ENCODE measurements at regions of chr20 and their contacts with region 1.

Region 1: GRCh38 chr20:34768096-34768495 is 57.4 kb downstream of the NCOA6 start:
- DNase-seq: no peak
- CTCF ChIP-seq: no peak

Region 2: DNA sequence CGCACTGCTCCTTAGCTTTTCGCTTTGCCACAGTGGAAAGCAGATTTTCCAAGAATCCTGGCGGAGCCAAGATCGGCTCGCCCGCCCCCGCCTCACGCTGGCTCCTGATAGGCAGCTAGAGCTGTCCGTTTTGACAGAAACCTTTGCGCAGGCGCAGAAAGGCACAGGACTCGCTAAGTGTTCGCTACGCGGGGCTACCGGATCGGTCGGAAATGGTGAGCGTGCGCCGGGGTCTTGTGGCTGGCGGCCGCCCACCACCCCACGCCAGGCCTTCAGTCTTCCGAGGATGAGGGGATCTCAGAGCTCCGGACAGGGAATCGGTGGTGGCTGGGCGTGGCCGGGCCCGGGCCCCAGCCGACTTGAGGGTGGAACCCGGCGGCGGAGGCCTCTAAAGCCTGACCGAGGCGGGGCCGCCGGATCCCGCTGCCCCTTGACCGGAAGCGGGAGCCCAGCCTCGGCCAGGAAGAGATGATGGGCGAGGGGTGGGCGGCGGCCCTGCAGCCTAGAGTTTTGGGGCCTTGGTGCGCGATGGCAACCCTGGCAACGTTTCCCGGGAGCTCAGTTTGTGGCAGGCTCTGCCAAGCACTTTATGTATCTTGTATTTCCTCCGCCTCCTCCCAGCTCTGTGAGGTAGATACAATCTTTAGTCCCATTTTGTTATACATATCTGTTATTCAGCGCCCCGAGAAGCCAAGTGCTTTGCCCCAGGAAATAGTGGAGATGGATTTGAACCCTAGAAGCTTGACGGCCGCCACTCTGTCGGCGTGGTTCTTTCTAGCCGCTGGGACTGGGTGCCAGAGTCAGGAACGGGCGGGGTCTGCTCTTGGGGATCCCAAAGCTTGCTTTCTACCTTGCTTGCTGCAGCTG is 251.6 kb before region 1 on chr20 and contains the start of gene DYNLRB1:
- CTCF ChIA-PET with region 1: interaction called, 12 read pairs
- POLR2A ChIA-PET with region 1: no interaction called
- DNase-seq: peak; percentile 92
- CTCF ChIP-seq: no peak

Region 3: DNA sequence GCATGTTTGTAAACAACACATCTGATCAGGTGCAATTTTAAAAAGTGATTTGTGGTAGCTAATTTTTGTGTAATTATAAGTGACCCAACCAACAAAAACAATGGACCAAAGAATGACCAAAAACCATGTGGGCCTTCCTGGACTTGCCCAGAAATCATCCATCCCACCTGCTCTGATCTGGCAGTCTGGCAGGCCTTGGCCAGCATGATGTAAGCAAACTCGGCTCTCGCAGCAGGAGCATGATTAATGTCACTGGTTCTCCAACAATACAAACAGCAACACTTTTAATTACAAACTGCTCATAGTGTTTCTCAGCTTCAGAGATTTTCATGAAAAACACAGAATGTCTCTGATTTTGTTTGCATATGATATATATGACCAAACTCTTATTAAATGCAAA is 47.8 kb before region 1 on chr20:
- CTCF ChIA-PET with region 1: interaction called, 13 read pairs
- POLR2A ChIA-PET with region 1: no interaction called
- DNase-seq: no peak
- CTCF ChIP-seq: no peak

Region 4: GRCh38 chr20:34753706-34754461 is 14.2 kb before region 1 on chr20:
- CTCF ChIA-PET with region 1: interaction called, 111 read pairs
- POLR2A ChIA-PET with region 1: no interaction called
- DNase-seq: no peak
- CTCF ChIP-seq: peak; percentile 35

Region 5: DNA sequence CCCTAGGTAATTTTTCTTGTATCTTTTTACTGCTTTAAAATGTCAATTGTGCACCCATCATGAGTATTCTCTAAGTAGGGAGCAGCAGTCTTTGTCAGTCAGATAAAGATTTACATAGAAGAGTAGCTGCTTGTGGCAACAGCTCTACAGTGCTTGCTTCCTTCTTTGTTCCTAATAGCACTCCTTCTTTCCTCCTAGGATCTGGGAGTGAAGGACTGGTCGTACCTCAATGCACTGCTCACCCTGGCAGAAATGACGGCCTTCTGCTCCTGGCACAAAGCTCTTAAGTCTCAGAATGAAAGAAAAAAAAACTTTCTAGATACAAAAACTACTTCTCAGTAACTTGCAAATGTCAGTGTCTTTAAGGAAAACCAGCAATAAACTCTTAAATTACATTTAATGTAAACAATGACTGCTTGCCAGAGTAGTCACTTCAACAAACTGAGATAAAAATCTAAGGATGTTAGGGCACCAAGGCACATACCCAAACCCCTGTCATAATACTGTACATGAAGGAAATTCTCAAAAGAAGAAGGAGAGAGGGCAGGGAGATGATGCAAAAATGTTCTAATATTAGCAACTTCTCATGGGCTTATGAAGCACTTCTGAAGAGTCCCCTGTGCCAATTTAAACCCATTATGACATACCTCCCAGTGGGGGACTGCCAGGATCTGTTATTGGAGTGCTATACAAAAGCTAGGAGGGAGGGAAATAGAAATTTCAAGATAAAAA is 23.4 kb after region 1 on chr20:
- CTCF ChIA-PET with region 1: interaction called, 12 read pairs
- POLR2A ChIA-PET with region 1: no interaction called
- DNase-seq: no peak
- CTCF ChIP-seq: no peak

Region 6: GRCh38 chr20:35561268-35561667 is 793.2 kb after region 1 on chr20:
- CTCF ChIA-PET with region 1: no interaction called
- POLR2A ChIA-PET with region 1: no interaction called
- DNase-seq: no peak
- CTCF ChIP-seq: peak; percentile 25